Activated T-helper 2 cell treated with anti-CD3 and anti-CD28 coated beads, Interferon-gamma antibody, Interleukin-2, Interleukin-4, amounts not matched to agents 10 μg/mL and 5 μg/mL and 100 μg/mL, durations not matched to agents 14 hours and 24 hours and 36 hours (primary cell): ENCODE measurements at regions of chr17 and their contacts with region 1.

Region 1: DNA sequence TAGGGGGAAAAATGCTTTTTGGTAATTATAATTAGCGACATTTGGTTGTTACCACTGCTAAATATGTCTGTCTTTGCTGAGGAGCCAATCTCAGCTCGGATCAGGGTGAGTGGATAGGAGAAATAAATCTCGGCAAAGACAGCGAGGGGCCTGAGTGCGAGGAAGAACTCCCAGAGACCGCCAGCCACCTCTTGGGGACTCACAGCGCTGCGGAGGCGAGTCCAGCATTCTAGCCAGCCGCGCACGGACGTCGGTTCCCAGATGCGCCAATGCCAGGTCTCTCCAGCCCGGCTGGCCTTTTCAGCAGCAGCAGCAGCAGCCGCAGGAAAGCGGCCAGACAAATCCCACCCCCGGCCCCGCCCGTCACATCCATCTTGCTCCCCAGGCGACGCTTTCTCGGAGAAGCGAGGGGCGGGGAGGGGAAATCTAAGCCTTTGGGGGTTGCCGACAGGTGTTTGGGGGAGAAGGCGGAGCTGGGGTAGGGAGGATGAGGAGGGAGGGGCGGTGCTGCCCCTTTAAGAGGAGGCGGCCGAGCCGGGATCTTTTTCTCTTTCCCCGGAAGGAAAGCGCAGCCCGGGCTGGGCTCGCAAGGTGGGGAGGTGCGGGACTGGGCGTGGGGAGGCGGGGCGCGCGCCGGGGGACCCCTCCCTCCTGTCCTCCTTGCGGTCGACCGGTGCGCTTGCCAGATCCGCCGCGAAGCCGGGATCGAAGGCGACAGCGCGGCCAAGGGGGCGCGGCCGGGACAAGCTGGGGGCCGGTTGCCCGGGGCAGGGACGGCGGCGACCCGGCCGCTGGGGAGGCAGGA is at the start of gene ITGA3:
- DNase-seq: peak; percentile 56
- H3K4me3 Mint-ChIP-seq: peak within 1 kb of the TSS; percentile 88
- H3K27ac Mint-ChIP-seq: peak within 1 kb of the TSS; percentile 30
- H3K4me1 Mint-ChIP-seq: peaks cover 33% of the 10 kb centered on the region
- H3K27me3 Mint-ChIP-seq: peaks cover 12% of the 10 kb centered on the region
- total RNA-seq, gene ITGA3: 10.1 and 10.8 TPM in 2 replicates

Region 2: DNA sequence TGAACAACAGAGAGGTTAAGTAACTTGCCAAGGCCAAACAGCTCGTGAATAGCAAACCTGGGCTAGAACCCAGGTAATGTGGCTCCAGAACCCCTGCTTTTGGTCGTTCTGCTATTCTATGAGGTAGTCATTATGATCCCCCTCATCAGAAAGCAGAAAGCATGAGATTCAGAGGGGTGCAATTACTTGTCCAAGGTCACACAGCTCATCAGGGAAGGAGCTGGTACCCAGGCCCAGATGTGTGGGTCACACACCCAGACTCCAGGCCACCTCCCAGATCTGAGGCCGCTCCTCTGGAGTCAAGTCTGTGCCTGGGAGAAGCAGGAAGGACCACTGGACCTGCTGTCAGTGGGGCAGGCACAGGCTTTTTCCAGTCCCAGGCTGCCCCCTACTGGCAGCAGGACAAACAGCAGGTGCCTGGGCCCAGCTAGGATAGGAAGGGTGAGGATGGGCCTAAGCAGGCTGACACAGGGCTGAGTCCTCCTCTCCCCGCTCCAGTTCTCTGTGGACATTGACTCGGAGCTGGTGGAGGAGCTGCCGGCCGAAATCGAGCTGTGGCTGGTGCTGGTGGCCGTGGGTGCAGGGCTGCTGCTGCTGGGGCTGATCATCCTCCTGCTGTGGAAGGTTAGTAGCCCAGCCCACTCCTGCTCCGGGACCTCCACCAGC is 31.8 kb after region 1 on chr17:
- intact Hi-C with region 1: loop called (anchors 1 kb)
- DNase-seq: peak; percentile 70
- H3K4me3 Mint-ChIP-seq: no peak overlapping the region
- H3K27ac Mint-ChIP-seq: no peak overlapping the region
- H3K4me1 Mint-ChIP-seq: no peaks in the 10 kb centered on the region
- H3K27me3 Mint-ChIP-seq: no peaks in the 10 kb centered on the region